Posterior vena cava (tissue), 2 donors: ENCODE measurements at regions of chr1 and their contacts with region 1.

Region 1: GRCh38 chr1:223133824-223134435 is 9.1 kb downstream of the TLR5 start:
- DNase-seq: peak; percentile 96

Region 2: DNA sequence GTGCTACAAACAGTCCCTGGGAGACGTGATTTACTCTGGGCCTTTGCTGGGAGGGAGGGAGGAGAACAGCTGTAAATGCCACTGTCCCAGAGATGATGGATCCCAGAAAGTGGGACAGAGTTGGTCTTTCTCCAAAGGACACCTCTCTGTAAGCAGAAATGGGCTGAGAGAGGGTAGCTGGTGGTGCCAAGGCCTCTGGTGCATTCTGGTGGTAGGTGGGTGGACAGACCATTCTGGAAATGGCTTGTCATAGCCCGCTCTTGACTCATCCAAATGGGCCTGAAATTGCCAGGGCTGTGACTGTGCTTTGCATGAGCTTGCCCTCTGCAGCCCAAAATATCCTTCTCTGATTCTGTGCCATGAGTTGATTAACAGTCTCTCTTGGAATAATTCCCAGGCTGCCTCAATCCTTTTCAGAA is 295.4 kb after region 1 on chr1:
- intact Hi-C with region 1: loop called in 1 of 2 experiments (anchors 10 kb)
- DNase-seq: peak; percentile 80

Region 3: DNA sequence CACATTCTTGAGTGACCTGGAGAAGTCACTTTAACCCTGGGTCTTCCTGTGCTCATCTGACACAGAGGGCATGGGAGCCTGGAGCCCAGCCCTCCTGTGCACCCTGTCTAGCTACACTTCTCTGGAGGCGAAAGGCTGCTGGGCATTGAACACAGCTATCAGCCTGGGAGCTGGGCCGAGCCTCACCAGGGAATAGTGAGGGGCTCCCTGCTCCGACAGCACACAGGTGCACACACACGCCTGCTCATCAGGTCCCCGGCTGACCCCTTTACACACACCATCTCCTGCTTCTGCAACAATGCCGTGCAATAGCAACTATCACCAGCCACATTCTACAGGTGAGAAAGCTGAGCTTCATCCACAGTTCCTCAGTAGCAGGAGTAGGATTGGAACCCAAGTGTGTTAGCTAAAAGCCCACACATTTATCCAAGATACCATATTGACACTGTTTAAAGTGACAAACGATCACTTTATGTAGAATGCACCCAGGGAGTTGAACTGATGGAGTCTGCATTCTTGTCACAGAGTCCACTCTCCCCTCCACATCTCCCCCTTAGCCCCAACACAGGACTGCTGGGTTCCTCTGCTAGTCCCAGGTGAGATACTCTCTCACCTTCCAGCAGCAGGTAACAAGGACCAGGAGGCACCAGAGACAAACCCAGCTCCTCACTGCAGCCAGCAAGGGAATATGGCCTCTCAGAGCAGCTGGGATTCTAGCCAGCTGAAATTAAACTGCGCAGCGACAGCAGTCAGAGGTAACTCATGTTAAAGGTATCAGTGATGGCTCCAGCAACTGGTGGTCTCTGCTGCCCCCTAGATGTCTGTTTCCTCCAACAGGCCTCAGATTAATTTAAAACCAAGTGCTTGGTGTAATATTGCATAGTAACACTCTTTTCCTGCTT is 549.9 kb after region 1 on chr1:
- intact Hi-C with region 1: loop called in 1 of 2 experiments (anchors 5 kb)
- DNase-seq: no peak